Gastrocnemius medialis (tissue), 4 donors: ENCODE measurements at regions of chr9 and their contacts with region 1.

Region 1: GRCh38 chr9:104927912-104928740 is at the start of gene ABCA1:
- DNase-seq: peak; percentile 94 to 96
- ATAC-seq: peak; percentile 85
- H3K4me3 ChIP-seq: peak within 1 kb of the TSS; percentile 68 to 94 (median 88)
- H3K27ac ChIP-seq: peak within 1 kb of the TSS; percentile 89 to 98 (median 96)
- H3K4me1 ChIP-seq: peaks cover 30 to 31% of the 10 kb centered on the region in 2 donors
- H3K27me3 ChIP-seq: no peaks in the 10 kb centered on the region
- CTCF ChIP-seq: no peak
- POLR2A ChIP-seq: peak; percentile 51 to 96
- total RNA-seq, gene ABCA1: 4.9 to 23.8 (median 21.5) TPM

Region 2: DNA sequence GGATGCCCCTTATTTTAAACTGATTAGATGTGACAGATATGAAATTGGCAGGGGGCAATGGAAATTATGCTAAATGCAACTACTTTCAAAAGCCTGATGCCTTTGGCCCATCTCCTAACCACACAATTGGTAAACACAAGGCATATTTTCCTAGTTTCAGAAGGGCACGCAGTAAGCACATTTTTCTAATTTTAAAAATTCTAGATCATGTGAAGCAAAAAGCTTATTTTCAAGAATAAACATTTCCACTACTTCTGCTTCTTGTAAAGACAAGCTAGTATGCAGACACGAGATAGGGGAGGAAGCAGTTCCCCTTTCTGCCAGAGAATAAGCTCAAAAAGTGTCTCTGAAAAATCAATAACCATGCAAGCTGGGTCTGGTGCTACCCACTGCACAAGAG is 67.9 kb before region 1 on chr9:
- in situ Hi-C with region 1: no loop called
- intact Hi-C with region 1: no loop called
- DNase-seq: no peak
- ATAC-seq: no peak
- H3K4me3 ChIP-seq: no peak overlapping the region
- H3K27ac ChIP-seq: peak overlapping the region in 3 of 4 donors; percentile 16 to 61 (median 26)
- H3K4me1 ChIP-seq: peaks cover 31 to 34% of the 10 kb centered on the region in 2 donors
- H3K27me3 ChIP-seq: no peaks in the 10 kb centered on the region
- CTCF ChIP-seq: no peak
- POLR2A ChIP-seq: no peak

Region 3: GRCh38 chr9:104968025-104968982 is 40.2 kb after region 1 on chr9:
- in situ Hi-C with region 1: loop called in 2 of 4 experiments (anchors 5 kb)
- intact Hi-C with region 1: loop called (anchors 1 kb)
- DNase-seq: peak; percentile 77 to 94
- ATAC-seq: peak; percentile 91 to 93
- H3K4me3 ChIP-seq: peak overlapping the region; percentile 80 to 97 (median 82)
- H3K27ac ChIP-seq: peak overlapping the region; percentile 94 to 99 (median 96)
- H3K4me1 ChIP-seq: peaks cover 21 to 25% of the 10 kb centered on the region in 2 donors
- H3K27me3 ChIP-seq: no peaks in the 10 kb centered on the region
- CTCF ChIP-seq: peak in 1 of 5 experiments; percentile 25
- POLR2A ChIP-seq: peak in 1 of 2 donors; percentile 54

Region 4: DNA sequence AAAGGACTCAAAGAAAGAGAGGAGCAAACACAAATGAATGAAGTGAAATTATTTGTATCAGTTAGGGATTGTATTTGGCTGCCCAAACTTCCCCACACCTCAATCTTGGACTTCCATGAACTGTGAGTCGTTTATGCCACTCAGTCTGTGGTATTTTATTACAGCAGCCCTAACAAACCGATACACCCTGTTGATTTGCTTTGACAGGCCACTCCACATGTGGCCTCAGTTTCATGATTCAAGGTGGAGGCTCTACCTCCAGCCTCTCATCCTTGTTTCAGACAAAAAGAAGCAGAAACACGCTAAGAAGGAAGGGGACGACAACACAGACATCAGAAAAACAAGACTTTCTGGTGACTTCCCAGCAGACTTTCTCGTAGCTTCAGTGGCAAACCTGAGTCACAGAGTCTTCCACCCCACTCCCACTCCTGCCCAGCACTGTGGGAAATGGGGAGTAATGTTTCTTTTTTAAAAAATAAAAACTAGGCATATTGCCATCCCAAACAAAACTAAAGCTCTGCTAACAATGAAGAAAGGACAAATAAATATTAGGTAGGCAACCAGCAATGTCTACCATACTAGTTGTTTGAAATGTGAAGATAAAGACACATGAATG is 52.0 kb after region 1 on chr9:
- in situ Hi-C with region 1: no loop called
- intact Hi-C with region 1: no loop called
- DNase-seq: no peak
- ATAC-seq: no peak
- H3K4me3 ChIP-seq: no peak overlapping the region
- H3K27ac ChIP-seq: no peak overlapping the region
- H3K4me1 ChIP-seq: peaks cover 19 to 30% of the 10 kb centered on the region in 2 donors
- H3K27me3 ChIP-seq: no peaks in the 10 kb centered on the region
- CTCF ChIP-seq: no peak
- POLR2A ChIP-seq: no peak

Region 5: DNA sequence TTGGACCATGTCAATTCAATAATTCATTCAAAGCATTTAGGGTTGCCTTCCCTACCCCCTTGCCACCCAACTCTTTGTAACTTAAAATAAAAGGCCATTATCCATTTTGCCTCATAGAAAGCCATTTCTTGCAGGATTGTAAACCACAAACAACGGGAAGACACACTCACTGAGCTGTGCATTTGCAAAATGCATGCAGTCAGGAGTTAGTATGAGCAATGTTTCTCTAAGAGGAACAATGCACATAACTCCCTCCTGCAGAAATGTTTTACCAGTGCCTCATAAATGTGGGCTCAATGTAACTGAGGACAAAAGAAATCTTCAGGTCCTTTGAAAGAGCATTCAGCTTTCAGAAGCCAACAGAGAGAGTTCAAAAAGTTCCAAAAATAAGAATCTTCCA is 98.3 kb after region 1 on chr9:
- in situ Hi-C with region 1: no loop called
- intact Hi-C with region 1: no loop called
- DNase-seq: no peak
- ATAC-seq: no peak
- H3K4me3 ChIP-seq: no peak overlapping the region
- H3K27ac ChIP-seq: no peak overlapping the region
- H3K4me1 ChIP-seq: no peaks in the 10 kb centered on the region
- H3K27me3 ChIP-seq: no peaks in the 10 kb centered on the region
- CTCF ChIP-seq: no peak
- POLR2A ChIP-seq: no peak

Region 6: GRCh38 chr9:105039175-105039799 is 111.2 kb after region 1 on chr9:
- in situ Hi-C with region 1: no loop called
- intact Hi-C with region 1: loop called (anchors 2 kb)
- DNase-seq: no peak
- ATAC-seq: peak; percentile 77
- H3K4me3 ChIP-seq: no peak overlapping the region
- H3K27ac ChIP-seq: peak overlapping the region in 2 of 4 donors; percentile 42 to 69
- H3K4me1 ChIP-seq: peaks cover 18 to 22% of the 10 kb centered on the region in 2 donors
- H3K27me3 ChIP-seq: no peaks in the 10 kb centered on the region
- CTCF ChIP-seq: no peak
- POLR2A ChIP-seq: no peak

Region 7: DNA sequence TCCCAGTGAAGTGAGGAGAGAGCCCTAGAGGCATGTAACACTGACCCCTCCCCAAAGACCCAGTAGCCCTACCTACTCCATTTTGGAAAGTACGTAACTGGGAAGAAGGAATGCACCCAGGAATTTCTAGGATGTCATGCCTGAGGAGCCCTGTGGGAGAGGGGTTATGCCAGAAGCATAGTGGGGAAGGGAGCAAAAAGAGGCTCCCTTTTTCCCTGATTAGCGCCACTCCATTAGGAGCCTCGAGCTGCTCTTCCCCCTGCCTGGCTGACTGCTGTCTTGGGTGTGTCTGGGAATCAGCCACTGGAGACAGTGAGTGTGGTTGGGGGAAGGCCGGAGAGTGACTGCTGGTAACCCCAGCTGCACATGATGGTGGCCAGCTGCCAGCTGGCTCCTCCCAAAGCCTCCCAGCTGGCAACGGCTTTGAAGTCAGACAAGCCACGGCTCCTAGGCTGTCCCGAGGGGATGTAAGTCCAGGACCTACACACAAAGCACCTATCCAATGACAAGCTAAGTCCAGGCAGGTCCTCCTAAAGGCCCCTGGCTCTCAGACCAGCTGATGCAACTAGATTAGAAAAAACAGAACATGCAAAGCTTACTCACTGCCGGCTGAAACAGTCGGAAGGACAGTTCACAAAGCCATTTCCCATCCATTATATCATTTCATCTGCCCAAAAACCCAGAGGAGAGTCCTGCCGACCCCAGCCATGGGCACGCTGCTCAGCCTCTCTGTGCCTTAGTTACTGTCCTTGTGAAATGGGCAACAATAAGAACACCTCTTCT is 136.4 kb after region 1 on chr9:
- in situ Hi-C with region 1: no loop called
- intact Hi-C with region 1: loop called (anchors 2 kb)
- DNase-seq: peak; percentile 94 to 98
- ATAC-seq: peak; percentile 95
- H3K4me3 ChIP-seq: peak overlapping the region in 3 of 4 donors; percentile 17 to 33 (median 17)
- H3K27ac ChIP-seq: peak overlapping the region; percentile 84 to 92 (median 87)
- H3K4me1 ChIP-seq: peaks cover 21 to 24% of the 10 kb centered on the region in 2 donors
- H3K27me3 ChIP-seq: no peaks in the 10 kb centered on the region
- CTCF ChIP-seq: peak in 2 of 5 experiments; percentile 14 to 22
- POLR2A ChIP-seq: peak; percentile 47 to 74

Region 8: DNA sequence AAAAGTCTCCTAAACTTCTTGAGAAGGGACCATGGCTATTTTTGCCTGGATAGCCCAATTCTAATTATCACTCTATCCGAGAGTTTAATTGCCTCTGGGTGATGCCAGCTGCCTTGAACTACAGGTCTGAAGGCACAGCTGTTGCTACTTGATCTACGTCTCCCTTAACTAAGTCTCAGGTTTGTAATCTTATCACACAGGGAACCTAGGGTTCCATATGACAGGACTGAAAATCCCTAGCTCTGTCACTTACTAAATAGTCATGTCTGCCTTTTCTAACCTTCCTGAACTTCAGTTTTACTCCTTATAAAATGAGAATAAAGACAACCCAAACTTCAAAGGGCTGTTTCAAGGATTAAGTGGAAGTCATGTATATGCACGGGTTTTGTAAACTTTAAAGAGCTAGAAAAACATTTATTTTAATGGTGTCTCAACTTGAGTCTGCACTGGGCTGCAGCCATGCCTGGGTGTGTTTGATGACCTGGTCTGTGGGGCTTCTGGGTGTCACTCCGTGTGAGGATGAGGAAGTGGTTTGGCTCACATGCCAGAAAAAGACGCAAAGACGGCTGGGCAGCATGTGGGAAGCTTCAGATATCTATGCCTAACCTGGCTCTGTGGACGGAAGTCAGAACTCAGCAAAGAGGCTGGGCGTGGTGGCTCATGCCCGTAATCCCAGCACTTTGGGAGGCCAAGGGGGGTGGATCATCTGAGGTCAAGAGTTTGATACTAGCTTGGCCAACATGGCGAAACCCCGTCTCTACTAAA is 187.0 kb after region 1 on chr9:
- in situ Hi-C with region 1: no loop called
- intact Hi-C with region 1: loop called (anchors 5 kb)
- DNase-seq: peak; percentile 30 to 58
- ATAC-seq: peak; percentile 22 to 51
- H3K4me3 ChIP-seq: no peak overlapping the region
- H3K27ac ChIP-seq: peak overlapping the region; percentile 73 to 82 (median 80)
- H3K4me1 ChIP-seq: peaks cover 19 to 36% of the 10 kb centered on the region in 2 donors
- H3K27me3 ChIP-seq: no peaks in the 10 kb centered on the region
- CTCF ChIP-seq: no peak
- POLR2A ChIP-seq: peak in 1 of 2 donors; percentile 51

Region 9: DNA sequence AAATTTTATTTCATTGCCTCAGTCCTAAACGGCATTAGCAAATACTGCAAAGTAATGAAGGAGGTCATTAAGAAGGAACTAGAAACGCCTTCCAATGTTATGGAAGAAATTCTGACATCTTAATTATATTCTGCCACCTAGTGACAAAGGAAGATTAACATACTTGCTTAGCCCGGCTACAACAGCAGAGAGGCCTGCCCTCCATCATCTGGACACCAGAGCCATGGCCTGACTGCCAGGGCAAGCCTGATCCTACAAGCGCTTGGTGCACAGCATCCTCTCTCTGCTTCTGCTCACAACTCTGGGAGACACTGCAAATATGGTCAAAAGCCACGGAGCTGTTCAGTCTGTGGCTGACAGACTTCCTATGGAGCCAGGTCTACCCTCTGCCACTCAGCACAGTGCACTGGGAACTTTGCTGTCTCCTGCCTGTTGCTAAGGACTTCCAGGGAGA is 229.0 kb after region 1 on chr9:
- in situ Hi-C with region 1: loop called in 3 of 4 experiments (anchors 5 to 10 kb)
- intact Hi-C with region 1: loop called (anchors 1 kb)
- DNase-seq: peak; percentile 14 to 57
- ATAC-seq: peak; percentile 96 to 98
- H3K4me3 ChIP-seq: no peak overlapping the region
- H3K27ac ChIP-seq: no peak overlapping the region
- H3K4me1 ChIP-seq: peaks cover 3 to 5% of the 10 kb centered on the region in 2 donors
- H3K27me3 ChIP-seq: no peaks in the 10 kb centered on the region
- CTCF ChIP-seq: peak in 4 of 5 experiments; percentile 38 to 60 (median 58)
- POLR2A ChIP-seq: no peak

Region 10: DNA sequence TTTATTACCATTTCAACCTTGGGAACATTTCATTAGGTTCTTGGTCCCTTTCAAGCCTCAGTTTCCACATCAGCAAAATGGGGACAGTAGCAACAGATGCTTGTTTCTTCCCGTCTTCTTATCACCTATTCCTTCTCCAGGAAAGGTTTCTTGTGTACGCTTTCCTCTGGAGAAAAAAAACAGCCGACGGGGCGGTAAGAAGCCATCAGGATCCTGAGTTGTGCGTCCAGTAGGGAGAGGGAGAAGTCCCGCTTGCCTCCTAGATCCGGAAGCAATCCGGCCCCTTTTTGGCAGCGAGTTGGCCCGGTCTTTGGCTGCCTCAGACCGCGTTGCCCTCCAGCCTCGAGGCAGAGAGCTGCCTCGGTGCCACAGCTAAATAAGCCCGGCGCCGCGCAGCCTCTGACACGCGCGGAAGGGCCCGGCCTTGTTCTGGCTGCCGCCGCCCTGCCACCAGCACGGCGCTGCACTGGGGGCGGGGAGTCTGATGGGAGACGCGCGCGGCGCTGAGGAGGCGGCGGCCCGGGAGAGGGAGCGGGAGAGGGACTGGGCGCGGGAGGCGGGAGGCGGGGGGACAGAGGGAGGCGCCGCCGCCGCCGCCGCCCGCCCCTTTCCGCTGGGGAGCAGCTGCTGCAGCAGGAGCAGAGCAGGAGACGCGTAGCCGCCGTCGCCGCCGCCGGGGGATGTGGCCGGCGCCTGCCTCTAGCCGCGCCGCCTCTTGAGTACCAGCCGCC is 316.0 kb after region 1 on chr9 and contains the start of gene SLC44A1:
- in situ Hi-C with region 1: loop called in 1 of 4 experiments (anchors 10 kb)
- intact Hi-C with region 1: loop called (anchors 5 kb)
- DNase-seq: peak; percentile 91 to 95
- ATAC-seq: peak; percentile 89 to 90
- H3K4me3 ChIP-seq: peak within 1 kb of the TSS; percentile 76 to 96 (median 84)
- H3K27ac ChIP-seq: peak within 1 kb of the TSS; percentile 71 to 82 (median 74)
- H3K4me1 ChIP-seq: peaks cover 10 to 16% of the 10 kb centered on the region in 2 donors
- H3K27me3 ChIP-seq: no peaks in the 10 kb centered on the region
- CTCF ChIP-seq: peak in 1 of 5 experiments; percentile 9
- POLR2A ChIP-seq: peak; percentile 85 to 88
- total RNA-seq, gene SLC44A1: 5.4 to 15.9 (median 11.3) TPM